ENCODE measurements at regions of chr5 and their contacts with region 1.

Region 1: DNA sequence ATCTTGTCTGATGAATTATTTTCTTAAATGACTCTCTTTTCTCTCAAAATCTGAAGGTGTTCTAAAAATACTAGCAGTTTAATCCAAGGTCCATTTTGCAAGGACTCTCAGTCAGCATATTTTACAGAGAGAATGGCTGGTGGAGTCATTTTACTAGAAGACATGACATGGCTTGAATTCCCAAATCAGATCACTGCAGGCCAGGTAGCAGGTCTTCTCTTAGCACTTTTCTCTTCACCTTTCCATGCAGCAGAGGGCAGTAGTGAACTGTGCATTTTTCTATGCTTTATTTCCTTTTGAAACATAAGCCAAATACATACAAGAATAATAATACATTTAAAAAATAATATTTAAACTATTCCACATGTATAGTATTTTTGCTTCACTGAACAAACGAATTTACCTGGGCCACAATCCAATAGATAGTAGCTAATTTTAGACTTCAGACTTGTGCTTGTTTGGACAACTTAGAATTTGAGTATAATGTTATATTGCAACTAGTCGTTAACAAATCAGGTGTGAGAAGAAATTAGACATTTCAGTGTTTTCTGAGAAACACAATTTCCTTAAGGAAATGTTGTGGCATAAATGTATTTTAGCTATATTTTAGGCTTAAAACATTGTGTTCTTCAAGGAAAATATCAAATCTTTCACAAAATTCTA is 289.4 kb upstream of the DAB2 start:
- DNase-seq: peak; percentile 79
- H3K4me3 Mint-ChIP-seq: no peak overlapping the region
- H3K27ac Mint-ChIP-seq: no peak overlapping the region
- H3K4me1 Mint-ChIP-seq: peaks cover 23% of the 10 kb centered on the region
- H3K27me3 Mint-ChIP-seq: no peaks in the 10 kb centered on the region
- CTCF ChIP-seq: peak; percentile 62

Region 2: DNA sequence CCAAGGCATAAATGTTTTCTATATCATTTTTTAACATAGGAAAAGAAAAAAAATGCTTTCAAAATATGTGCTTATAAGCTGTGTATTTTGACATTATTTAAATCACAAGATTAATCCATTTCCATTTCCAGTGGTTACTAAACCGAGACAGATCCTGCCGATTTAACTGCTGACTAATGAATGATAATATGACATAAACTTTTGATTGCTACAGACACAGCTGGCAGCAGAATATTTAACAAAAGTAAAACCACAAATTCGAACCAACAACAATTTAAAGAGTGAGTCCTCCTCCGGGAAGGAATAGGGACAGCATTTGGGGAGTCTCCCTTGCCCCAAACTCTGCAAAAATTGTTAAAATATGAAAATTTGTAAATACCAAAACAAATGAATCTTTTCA is 111.9 kb after region 1 on chr5:
- CTCF ChIA-PET with region 1: interaction called, 3 read pairs
- POLR2A ChIA-PET with region 1: no interaction called
- intact Hi-C with region 1: loop called (anchors 10 kb)
- DNase-seq: peak; percentile 13
- H3K4me3 Mint-ChIP-seq: no peak overlapping the region
- H3K27ac Mint-ChIP-seq: no peak overlapping the region
- H3K4me1 Mint-ChIP-seq: peaks cover 11% of the 10 kb centered on the region
- H3K27me3 Mint-ChIP-seq: no peaks in the 10 kb centered on the region
- CTCF ChIP-seq: no peak

Region 3: DNA sequence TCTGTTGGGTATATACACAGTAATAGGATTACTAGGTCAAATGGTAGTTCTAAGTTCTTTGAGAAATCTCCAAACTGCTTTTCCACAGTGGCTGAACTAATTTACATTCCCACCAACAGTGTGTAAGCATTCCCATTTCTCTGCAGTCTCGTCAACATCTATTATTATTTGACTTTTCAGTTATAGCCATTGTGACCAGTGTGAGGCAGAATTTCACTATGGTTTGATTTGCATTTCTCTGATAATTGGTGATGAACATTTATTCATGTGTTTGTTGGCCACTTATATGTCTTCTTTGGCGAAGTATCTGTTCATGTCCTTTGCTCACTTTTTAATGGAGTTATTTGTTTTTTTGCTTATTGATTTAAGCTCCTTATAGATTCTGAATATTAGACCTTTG is 306.8 kb after region 1 on chr5:
- CTCF ChIA-PET with region 1: no interaction called
- POLR2A ChIA-PET with region 1: no interaction called
- intact Hi-C with region 1: no loop called
- DNase-seq: no peak
- H3K4me3 Mint-ChIP-seq: no peak overlapping the region
- H3K27ac Mint-ChIP-seq: no peak overlapping the region
- H3K4me1 Mint-ChIP-seq: peaks cover 7% of the 10 kb centered on the region
- H3K27me3 Mint-ChIP-seq: no peaks in the 10 kb centered on the region
- CTCF ChIP-seq: no peak

Region 4: GRCh38 chr5:40258222-40258621 is 544.1 kb after region 1 on chr5:
- CTCF ChIA-PET with region 1: no interaction called
- POLR2A ChIA-PET with region 1: no interaction called
- intact Hi-C with region 1: loop called (anchors 10 kb)
- DNase-seq: peak; percentile 44
- H3K4me3 Mint-ChIP-seq: no peak overlapping the region
- H3K27ac Mint-ChIP-seq: no peak overlapping the region
- H3K4me1 Mint-ChIP-seq: no peaks in the 10 kb centered on the region
- H3K27me3 Mint-ChIP-seq: no peaks in the 10 kb centered on the region
- CTCF ChIP-seq: no peak

Region 5: DNA sequence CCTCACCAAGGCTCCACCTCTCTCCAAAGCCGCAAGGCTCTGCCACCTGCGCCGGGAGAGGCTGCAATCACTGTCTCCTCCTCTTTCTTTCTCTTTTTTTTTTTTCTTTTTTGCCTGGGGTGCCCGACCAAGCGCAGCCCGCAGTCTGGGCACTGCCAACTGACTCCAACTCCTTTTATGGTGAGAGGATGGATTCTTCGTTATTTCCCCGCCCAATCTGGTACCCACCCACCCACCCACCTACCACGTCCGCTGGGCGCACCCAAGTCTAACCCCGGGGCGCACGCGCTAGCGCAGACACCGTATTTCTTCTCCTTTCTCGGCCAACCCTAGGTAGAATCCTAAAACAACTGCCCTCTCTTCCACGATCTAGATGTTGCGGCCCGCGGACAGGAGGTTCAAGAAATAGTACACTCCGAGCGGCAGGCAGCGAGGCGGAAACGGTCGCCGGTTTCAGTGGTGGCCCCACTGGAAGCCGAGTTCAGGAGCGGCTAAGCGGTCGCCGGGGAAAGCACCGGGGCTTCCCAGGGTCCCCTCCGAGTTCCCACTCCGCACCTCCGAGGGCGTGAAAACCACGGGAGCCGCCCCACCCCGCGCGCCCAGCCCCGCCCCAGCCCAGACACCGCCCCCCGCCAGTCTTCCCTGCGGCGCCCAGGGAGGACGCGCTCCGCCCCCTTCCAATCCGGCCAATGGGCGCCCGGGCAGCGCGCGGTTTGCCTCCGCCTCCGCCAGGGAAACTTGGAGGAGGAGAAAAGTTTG is 965.2 kb after region 1 on chr5:
- CTCF ChIA-PET with region 1: interaction called, 63 read pairs
- POLR2A ChIA-PET with region 1: interaction called, 6 read pairs
- intact Hi-C with region 1: no loop called
- DNase-seq: peak; percentile 96
- H3K4me3 Mint-ChIP-seq: peak overlapping the region; percentile 91
- H3K27ac Mint-ChIP-seq: peak overlapping the region; percentile 97
- H3K4me1 Mint-ChIP-seq: peaks cover 60% of the 10 kb centered on the region
- H3K27me3 Mint-ChIP-seq: no peaks in the 10 kb centered on the region
- CTCF ChIP-seq: no peak

Region 6: GRCh38 chr5:40736103-40736875 is 1022.1 kb after region 1 on chr5:
- CTCF ChIA-PET with region 1: interaction called, 9 read pairs
- POLR2A ChIA-PET with region 1: no interaction called
- intact Hi-C with region 1: loop called (anchors 1 kb)
- DNase-seq: peak; percentile 66
- H3K4me3 Mint-ChIP-seq: no peak overlapping the region
- H3K27ac Mint-ChIP-seq: no peak overlapping the region
- H3K4me1 Mint-ChIP-seq: peaks cover 12% of the 10 kb centered on the region
- H3K27me3 Mint-ChIP-seq: no peaks in the 10 kb centered on the region
- CTCF ChIP-seq: peak; percentile 71